ENCODE measurements at regions of chr3 and their contacts with region 1.

Region 1: GRCh38 chr3:136752422-136753325 is 496 bp upstream of the STAG1 start:
- DNase-seq: peak; percentile 99
- ATAC-seq: peak; percentile 76 to 94 (median 84)
- H3K4me3 ChIP-seq: peak overlapping the region; percentile 93
- H3K4me3 Mint-ChIP-seq: peak overlapping the region; percentile 95
- H3K27ac ChIP-seq: peak overlapping the region; percentile 99
- H3K27ac Mint-ChIP-seq: peak overlapping the region; percentile 92 to 93
- H3K4me1 ChIP-seq: peaks cover 21% of the 10 kb centered on the region
- H3K4me1 Mint-ChIP-seq: peaks cover 46 to 47% of the 10 kb centered on the region in 2 donors
- H3K27me3 ChIP-seq: no peaks in the 10 kb centered on the region
- H3K27me3 Mint-ChIP-seq: no peaks in the 10 kb centered on the region
- CTCF ChIP-seq: no peak

Region 2: DNA sequence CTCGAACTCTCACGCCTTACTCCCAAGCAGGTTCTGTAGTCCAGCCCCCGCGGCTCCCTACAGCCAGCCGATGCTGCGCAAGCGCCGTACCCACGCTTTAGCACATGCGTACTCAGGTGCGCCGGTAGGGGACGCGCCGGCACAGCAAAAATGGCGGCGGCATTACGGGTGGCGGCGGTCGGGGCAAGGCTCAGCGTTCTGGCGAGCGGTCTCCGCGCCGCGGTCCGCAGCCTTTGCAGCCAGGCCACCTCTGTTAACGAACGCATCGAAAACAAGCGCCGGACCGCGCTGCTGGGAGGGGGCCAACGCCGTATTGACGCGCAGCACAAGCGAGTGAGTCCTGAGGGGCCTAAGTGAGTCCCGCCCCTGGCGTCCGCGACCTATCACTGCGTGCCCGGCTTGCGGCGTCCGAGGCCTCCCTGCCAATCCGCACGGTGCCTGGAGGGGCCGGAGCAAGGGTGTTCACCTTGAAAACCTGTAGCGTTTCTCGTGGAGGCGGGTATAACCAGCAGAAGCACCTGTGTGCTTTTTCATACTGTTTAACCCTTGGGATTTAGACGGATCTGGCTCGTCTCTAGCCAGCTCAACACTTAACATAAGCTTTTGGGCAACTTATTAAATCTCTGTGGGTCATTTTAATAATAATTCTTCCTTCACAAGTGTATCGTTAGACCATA is 502.3 kb before region 1 on chr3 and contains the start of gene PCCB:
- intact Hi-C with region 1: loop called (anchors 2 kb)
- DNase-seq: peak; percentile 87 to 94
- ATAC-seq: peak; percentile 93 to 98 (median 94)
- H3K4me3 ChIP-seq: peak within 1 kb of the TSS; percentile 58
- H3K4me3 Mint-ChIP-seq: peak within 1 kb of the TSS; percentile 90
- H3K27ac ChIP-seq: peak within 1 kb of the TSS; percentile 63
- H3K27ac Mint-ChIP-seq: peak within 1 kb of the TSS; percentile 90 to 93
- H3K4me1 ChIP-seq: peaks cover 14% of the 10 kb centered on the region
- H3K4me1 Mint-ChIP-seq: peaks cover 20 to 30% of the 10 kb centered on the region in 2 donors
- H3K27me3 ChIP-seq: no peaks in the 10 kb centered on the region
- H3K27me3 Mint-ChIP-seq: no peaks in the 10 kb centered on the region
- CTCF ChIP-seq: peak; percentile 89
- total RNA-seq, gene PCCB: 17.7 to 19.9 (median 17.8) TPM

Region 3: DNA sequence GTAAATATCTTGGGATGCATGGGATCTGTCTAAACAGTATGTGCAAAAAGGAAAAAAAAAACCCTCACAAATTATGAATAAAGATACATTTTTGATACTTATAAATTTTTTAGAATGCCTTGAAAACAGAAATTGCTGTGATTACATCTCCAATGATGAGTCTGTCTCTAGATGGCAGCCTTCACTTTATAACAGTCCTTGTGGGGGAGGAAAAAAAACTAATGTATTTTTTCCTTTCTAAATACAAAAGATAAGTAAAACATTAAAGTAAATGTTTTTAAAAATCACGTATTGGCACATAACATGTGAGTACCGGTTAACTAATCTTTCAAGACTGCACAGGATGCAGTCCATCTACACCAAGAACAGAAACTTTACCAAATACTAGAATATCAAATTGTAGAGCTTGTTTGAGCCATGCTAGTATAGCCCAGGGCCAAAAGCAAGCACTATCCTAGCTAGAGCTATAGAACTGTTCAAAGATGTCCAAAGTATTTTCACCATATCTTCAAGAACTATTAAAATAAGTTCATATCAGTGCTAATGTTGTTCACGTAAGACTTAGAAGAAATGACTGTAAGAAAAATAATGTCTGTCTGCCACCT is 206.9 kb before region 1 on chr3:
- intact Hi-C with region 1: loop called (anchors 1 kb)
- DNase-seq: peak in 1 of 2 donors; percentile 7
- ATAC-seq: peak in 1 of 3 donors; percentile 30
- H3K4me3 ChIP-seq: no peak overlapping the region
- H3K4me3 Mint-ChIP-seq: no peak overlapping the region
- H3K27ac ChIP-seq: no peak overlapping the region
- H3K27ac Mint-ChIP-seq: peak overlapping the region; percentile 8 to 65
- H3K4me1 ChIP-seq: no peaks in the 10 kb centered on the region
- H3K4me1 Mint-ChIP-seq: peaks cover 11 to 25% of the 10 kb centered on the region in 2 donors
- H3K27me3 ChIP-seq: no peaks in the 10 kb centered on the region
- H3K27me3 Mint-ChIP-seq: no peaks in the 10 kb centered on the region
- CTCF ChIP-seq: no peak

Region 4: GRCh38 chr3:136787349-136787748 is 34.7 kb after region 1 on chr3:
- intact Hi-C with region 1: loop called (anchors 2 kb)
- DNase-seq: peak; percentile 47 to 57
- ATAC-seq: peak; percentile 93 to 99 (median 97)
- H3K4me3 ChIP-seq: no peak overlapping the region
- H3K4me3 Mint-ChIP-seq: peak overlapping the region; percentile 43
- H3K27ac ChIP-seq: peak overlapping the region; percentile 29
- H3K27ac Mint-ChIP-seq: peak overlapping the region; percentile 81 to 83
- H3K4me1 ChIP-seq: peaks cover 2% of the 10 kb centered on the region
- H3K4me1 Mint-ChIP-seq: peaks cover 14 to 16% of the 10 kb centered on the region in 2 donors
- H3K27me3 ChIP-seq: no peaks in the 10 kb centered on the region
- H3K27me3 Mint-ChIP-seq: no peaks in the 10 kb centered on the region
- CTCF ChIP-seq: no peak

Region 5: DNA sequence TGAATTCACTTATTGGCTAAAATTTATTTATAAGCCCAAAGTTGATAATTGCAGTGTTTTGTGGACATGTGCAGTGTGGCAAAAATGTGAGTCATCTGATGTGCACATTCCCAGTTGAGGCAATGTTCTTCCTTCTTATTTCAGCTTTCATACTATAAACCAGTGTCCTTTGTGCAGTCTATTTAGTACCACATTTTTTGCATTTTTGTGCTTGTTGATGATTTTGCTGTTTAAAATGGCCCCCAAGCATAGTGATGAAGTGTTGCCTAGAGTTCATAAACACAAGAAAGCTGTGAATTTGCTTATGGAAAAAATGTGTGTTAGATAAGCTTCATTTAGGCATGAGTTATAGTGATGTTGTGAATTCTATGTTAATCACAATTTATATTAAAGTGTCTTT is 185.7 kb after region 1 on chr3:
- intact Hi-C with region 1: loop called (anchors 5 kb)
- DNase-seq: no peak
- ATAC-seq: peak in 2 of 3 donors; percentile 42 to 72
- H3K4me3 ChIP-seq: no peak overlapping the region
- H3K4me3 Mint-ChIP-seq: no peak overlapping the region
- H3K27ac ChIP-seq: no peak overlapping the region
- H3K27ac Mint-ChIP-seq: peak overlapping the region; percentile 80 to 86
- H3K4me1 ChIP-seq: peaks cover 20% of the 10 kb centered on the region
- H3K4me1 Mint-ChIP-seq: peaks cover 62 to 73% of the 10 kb centered on the region in 2 donors
- H3K27me3 ChIP-seq: no peaks in the 10 kb centered on the region
- H3K27me3 Mint-ChIP-seq: no peaks in the 10 kb centered on the region
- CTCF ChIP-seq: no peak

Measured in natural killer cell (primary cell).